Cardiac septum (tissue), 1 donor: ENCODE measurements at regions of chr1 and their contacts with region 1.

Region 1: GRCh38 chr1:205354259-205354904 is 2.3 kb downstream of the KLHDC8A start:
- DNase-seq: no peak

Region 2: DNA sequence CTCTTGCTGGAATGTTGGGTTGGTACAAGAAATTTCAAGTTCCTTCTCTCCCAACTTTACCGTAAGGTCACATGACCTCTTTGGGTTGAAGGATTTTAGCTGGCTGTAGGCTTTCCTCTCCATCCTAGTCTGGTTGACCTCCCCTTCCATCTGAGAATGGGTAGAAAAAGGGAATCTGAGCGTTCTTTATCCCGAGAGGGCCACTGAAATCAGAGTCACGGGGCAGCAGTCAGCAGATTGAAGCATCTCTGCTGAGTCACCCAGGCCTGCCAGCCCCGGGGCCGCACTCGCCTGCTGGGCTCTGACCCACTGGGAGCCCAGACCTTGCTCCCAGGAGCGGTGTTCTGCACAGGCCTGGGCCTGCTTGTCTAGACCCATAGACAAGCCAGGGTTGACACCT is 95.7 kb before region 1 on chr1:
- intact Hi-C with region 1: no loop called
- DNase-seq: no peak

Region 3: GRCh38 chr1:205430696-205431305 is 76.4 kb after region 1 on chr1:
- intact Hi-C with region 1: loop called (anchors 2 kb)
- DNase-seq: peak; percentile 74